ENCODE measurements at regions of chr7 and their contacts with region 1.

Region 1: DNA sequence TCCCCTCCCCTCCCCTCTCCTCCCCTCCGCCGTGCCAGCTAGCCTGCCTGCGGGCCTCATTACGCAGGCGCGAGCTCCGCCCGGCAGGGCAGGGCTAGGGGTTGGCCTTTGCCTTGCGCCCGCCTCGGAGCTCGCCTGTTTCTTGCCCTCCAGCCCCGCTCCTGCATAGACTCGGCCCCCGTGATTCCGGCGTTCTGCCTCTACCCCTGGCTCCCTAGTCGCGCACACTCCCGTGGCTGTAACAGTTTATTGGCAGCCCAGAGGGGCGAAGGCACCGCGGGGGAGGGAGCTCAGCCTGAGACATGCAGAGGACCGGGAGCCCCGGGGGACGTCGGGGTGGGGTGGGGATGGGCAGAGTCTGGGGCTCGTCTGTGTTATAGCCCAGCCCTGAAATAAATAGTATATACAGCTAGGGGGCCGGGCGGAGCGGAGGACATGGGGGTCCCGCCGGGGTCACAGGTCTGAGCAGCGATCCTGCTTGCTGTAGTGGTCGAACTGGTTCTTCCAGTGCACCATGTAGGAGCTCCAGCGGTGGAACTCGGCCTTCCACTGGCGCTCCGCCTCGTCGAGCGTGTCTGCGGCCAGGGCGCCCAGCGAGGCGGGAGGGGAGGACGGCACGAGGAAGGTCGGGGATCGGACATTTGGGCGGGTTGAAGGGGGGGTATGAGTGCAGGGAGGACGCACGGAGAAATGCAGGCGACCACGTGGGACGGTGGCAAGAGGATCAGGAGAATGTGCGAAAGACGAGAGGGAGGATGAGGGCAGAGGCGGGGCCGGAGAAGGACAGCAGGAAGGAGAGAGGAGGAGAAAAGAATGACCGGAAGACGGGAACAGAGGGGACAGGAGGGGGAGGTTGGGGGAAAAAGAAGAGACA is 483 bp upstream of the UFSP1 start:
- DNase-seq: peak; percentile 94 to 96
- H3K4me3 ChIP-seq: peak overlapping the region; percentile 67
- H3K4me3 Mint-ChIP-seq: peak overlapping the region; percentile 88
- H3K27ac Mint-ChIP-seq: peak overlapping the region; percentile 87
- H3K4me1 ChIP-seq: peaks cover 29% of the 10 kb centered on the region
- H3K4me1 Mint-ChIP-seq: peaks cover 50% of the 10 kb centered on the region
- H3K27me3 ChIP-seq: no peaks in the 10 kb centered on the region
- H3K27me3 Mint-ChIP-seq: no peaks in the 10 kb centered on the region
- CTCF ChIP-seq: no peak

Region 2: GRCh38 chr7:100781255-100781654 is 108.7 kb before region 1 on chr7:
- CTCF ChIA-PET with region 1: no interaction called
- POLR2A ChIA-PET with region 1: no interaction called
- intact Hi-C with region 1: no loop called
- DNase-seq: no peak
- H3K4me3 ChIP-seq: no peak overlapping the region
- H3K4me3 Mint-ChIP-seq: no peak overlapping the region
- H3K27ac Mint-ChIP-seq: no peak overlapping the region
- H3K4me1 ChIP-seq: no peaks in the 10 kb centered on the region
- H3K4me1 Mint-ChIP-seq: no peaks in the 10 kb centered on the region
- H3K27me3 ChIP-seq: no peaks in the 10 kb centered on the region
- H3K27me3 Mint-ChIP-seq: no peaks in the 10 kb centered on the region
- CTCF ChIP-seq: no peak

Region 3: DNA sequence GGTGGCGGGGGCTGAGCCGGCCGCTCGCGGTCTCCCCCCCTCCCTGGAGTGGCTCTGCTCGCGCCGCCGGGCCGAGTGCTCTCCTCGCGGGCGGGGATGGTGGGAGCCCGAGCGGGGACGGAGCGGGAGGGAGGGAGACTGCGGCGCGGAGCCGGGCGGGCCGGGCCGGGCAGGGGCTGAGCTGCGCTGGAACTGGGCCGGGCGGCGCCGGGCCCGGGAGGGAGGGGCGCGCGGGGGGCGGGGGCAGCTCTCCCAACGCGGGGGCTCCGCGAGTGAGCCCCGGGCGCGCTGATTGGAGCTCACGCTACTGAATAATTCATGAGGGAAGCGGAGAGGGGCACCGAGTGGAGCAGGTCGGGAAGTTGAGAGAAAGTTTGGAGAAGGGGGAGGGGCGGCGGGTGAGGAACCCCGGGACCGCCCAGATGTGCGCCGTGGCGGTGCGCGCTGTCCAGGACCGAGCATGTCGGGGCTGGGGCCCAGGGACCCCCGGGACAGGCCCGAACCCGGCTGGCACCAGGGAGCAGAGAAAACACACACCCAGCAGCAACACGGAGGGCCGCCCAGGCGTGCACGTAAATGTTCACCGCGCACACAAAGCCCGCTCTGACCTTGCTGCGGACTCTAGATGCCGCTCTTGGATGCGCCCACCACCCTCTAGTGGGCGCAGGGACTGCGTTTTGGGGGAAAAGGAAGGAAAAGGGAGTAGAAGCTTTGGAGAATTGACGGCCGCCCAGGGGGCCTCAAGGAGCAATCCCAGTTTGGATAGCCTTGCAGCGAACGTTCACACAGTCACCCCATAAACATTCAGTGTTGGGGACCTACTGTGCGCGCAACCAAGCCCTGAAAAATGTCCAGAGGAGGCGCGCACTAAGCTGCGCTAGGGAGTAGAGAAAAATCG is 62.4 kb before region 1 on chr7 and contains the start of gene EPHB4:
- CTCF ChIA-PET with region 1: interaction called, 3 read pairs
- POLR2A ChIA-PET with region 1: interaction called, 11 read pairs
- intact Hi-C with region 1: no loop called
- DNase-seq: peak; percentile 93 to 95
- H3K4me3 ChIP-seq: peak within 1 kb of the TSS; percentile 71
- H3K4me3 Mint-ChIP-seq: peak within 1 kb of the TSS; percentile 89
- H3K27ac Mint-ChIP-seq: peak within 1 kb of the TSS; percentile 88
- H3K4me1 ChIP-seq: peaks cover 29% of the 10 kb centered on the region
- H3K4me1 Mint-ChIP-seq: peaks cover 27% of the 10 kb centered on the region
- H3K27me3 ChIP-seq: no peaks in the 10 kb centered on the region
- H3K27me3 Mint-ChIP-seq: no peaks in the 10 kb centered on the region
- CTCF ChIP-seq: peak; percentile 44 to 92
- total RNA-seq, gene EPHB4: 112 and 117 TPM in 2 replicates

Region 4: DNA sequence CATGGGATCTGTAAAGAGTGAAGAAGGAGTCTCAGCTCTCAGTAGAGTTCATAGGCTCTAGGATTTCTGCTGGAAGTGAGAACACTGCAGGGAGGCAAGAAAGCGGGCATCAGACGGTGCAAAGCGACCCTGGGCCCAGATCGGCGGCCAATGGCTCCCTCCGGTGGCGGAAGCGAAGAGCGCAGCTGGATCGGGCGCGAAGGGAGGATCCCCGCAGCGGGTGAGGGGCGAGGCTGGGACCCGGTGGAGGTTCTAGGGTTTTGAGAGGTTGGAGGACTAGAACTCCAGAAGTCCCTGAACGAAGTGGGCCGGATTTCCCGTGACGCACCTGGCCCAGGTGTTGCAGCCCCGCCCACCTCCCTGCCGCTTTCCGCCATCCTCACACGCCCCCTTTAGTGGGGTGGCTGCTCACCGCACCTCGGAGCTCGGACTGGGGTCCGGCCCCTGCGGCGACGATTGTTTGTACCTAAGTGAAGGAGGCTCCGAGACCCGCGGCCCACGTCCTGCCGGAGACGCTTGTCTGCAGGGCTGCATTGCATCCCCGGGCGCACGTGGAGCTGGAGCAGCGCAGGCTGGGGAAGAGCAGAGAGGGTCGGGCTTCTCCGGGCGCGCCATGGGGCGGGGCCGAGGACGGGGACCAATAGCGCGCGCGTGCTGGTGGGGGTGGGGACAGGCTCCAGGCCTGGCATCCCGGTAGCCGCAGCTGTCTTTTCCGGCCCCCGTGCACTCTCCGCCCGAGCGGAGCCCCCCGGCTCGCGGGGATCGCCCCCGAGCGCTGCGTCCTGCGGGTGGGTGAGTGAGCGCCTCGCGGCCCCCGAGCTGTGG is 37.7 kb before region 1 on chr7 and contains the start of gene SLC12A9:
- CTCF ChIA-PET with region 1: interaction called, 7 read pairs
- POLR2A ChIA-PET with region 1: interaction called, 5 read pairs
- intact Hi-C with region 1: loop called (anchors 1 kb)
- DNase-seq: peak; percentile 93 to 95
- H3K4me3 ChIP-seq: peak within 1 kb of the TSS; percentile 74
- H3K4me3 Mint-ChIP-seq: peak within 1 kb of the TSS; percentile 79
- H3K27ac Mint-ChIP-seq: peak within 1 kb of the TSS; percentile 66
- H3K4me1 ChIP-seq: peaks cover 9% of the 10 kb centered on the region
- H3K4me1 Mint-ChIP-seq: peaks cover 15% of the 10 kb centered on the region
- H3K27me3 ChIP-seq: no peaks in the 10 kb centered on the region
- H3K27me3 Mint-ChIP-seq: no peaks in the 10 kb centered on the region
- CTCF ChIP-seq: peak; percentile 89 to 97
- total RNA-seq, gene SLC12A9: 59.0 and 60.7 TPM in 2 replicates

Region 5: GRCh38 chr7:100865971-100866728 is 23.8 kb before region 1 on chr7:
- CTCF ChIA-PET with region 1: no interaction called
- POLR2A ChIA-PET with region 1: no interaction called
- intact Hi-C with region 1: no loop called
- DNase-seq: no peak
- H3K4me3 ChIP-seq: no peak overlapping the region
- H3K4me3 Mint-ChIP-seq: peak overlapping the region; percentile 75
- H3K27ac Mint-ChIP-seq: peak overlapping the region; percentile 88
- H3K4me1 ChIP-seq: peaks cover 17% of the 10 kb centered on the region
- H3K4me1 Mint-ChIP-seq: peaks cover 7% of the 10 kb centered on the region
- H3K27me3 ChIP-seq: no peaks in the 10 kb centered on the region
- H3K27me3 Mint-ChIP-seq: no peaks in the 10 kb centered on the region
- CTCF ChIP-seq: no peak

Region 6: DNA sequence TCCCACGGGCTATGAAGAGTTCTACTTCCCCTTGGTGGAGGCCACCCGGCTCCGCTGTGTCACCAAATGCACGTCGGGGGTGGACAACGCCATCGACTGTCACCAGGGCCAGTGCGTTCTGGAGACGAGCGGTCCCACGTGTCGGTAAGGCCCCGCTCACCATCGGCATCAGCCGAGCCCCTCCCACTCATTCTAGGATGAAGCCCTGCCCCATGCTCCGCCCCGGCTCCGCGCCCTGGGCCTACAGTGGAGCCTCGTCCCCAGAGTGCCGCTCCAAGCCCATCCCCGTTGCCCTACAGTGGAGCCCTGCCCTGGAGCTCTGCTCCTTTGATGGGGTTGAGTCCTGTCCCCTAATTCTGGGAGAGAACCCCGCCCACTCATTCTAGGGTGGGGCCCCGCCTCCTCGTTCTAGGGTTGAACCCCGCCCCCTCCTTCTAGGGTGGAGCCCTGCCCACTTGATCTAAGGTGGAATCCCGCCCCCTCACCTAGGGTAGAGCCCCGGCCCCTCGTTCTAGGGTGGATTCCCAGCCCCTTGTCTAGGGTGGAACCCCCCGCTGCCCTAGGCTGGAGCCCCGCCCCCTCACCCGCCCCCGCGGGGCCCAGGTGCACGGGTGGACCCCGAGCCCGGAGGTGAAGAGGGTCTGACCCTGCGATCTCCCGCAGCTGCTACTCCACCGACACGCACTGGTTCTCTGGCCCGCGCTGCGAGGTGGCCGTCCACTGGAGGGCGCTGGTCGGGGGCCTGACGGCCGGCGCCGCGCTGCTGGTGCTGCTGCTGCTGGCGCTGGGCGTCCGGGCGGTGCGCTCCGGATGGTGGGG is 75.9 kb after region 1 on chr7:
- CTCF ChIA-PET with region 1: interaction called, 10 read pairs
- POLR2A ChIA-PET with region 1: interaction called, 4 read pairs
- intact Hi-C with region 1: loop called (anchors 1 kb)
- DNase-seq: peak; percentile 94 to 99
- H3K4me3 ChIP-seq: peak overlapping the region; percentile 57
- H3K4me3 Mint-ChIP-seq: peak overlapping the region; percentile 78
- H3K27ac Mint-ChIP-seq: peak overlapping the region; percentile 60
- H3K4me1 ChIP-seq: peaks cover 13% of the 10 kb centered on the region
- H3K4me1 Mint-ChIP-seq: peaks cover 17% of the 10 kb centered on the region
- H3K27me3 ChIP-seq: no peaks in the 10 kb centered on the region
- H3K27me3 Mint-ChIP-seq: peaks cover 9% of the 10 kb centered on the region
- CTCF ChIP-seq: peak; percentile 96 to 98

Region 7: DNA sequence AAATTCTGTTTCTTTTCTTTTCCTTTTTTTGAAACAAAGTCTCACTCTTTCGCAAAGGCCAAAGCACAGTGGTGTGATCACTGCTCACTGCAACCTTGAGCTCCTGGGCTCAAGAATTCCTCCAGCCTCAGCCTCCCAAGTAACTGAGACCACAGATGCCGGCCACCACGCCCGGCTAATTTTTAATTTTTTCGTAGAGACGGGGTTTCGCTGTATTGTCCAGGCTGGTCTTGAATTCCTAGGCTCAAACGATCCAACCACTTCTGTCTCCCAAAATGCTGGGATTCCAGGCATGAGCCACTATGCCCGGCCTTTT is 169.6 kb after region 1 on chr7:
- CTCF ChIA-PET with region 1: interaction called, 3 read pairs
- POLR2A ChIA-PET with region 1: interaction called, 14 read pairs
- intact Hi-C with region 1: no loop called
- DNase-seq: no peak
- H3K4me3 ChIP-seq: no peak overlapping the region
- H3K4me3 Mint-ChIP-seq: no peak overlapping the region
- H3K27ac Mint-ChIP-seq: no peak overlapping the region
- H3K4me1 ChIP-seq: no peaks in the 10 kb centered on the region
- H3K4me1 Mint-ChIP-seq: no peaks in the 10 kb centered on the region
- H3K27me3 ChIP-seq: no peaks in the 10 kb centered on the region; the same call in 1 of the 2 replicates
- H3K27me3 Mint-ChIP-seq: peaks cover 24% of the 10 kb centered on the region
- CTCF ChIP-seq: no peak

Region 8: GRCh38 chr7:101085162-101085987 is 195.4 kb after region 1 on chr7 and contains the start of gene TRIM56:
- CTCF ChIA-PET with region 1: no interaction called
- POLR2A ChIA-PET with region 1: interaction called, 11 read pairs
- intact Hi-C with region 1: no loop called
- DNase-seq: peak; percentile 95 to 96
- H3K4me3 ChIP-seq: peak within 1 kb of the TSS; percentile 82
- H3K4me3 Mint-ChIP-seq: peak within 1 kb of the TSS; percentile 85
- H3K27ac Mint-ChIP-seq: peak within 1 kb of the TSS; percentile 83
- H3K4me1 ChIP-seq: peaks cover 12% of the 10 kb centered on the region
- H3K4me1 Mint-ChIP-seq: peaks cover 16% of the 10 kb centered on the region
- H3K27me3 ChIP-seq: no peaks in the 10 kb centered on the region
- H3K27me3 Mint-ChIP-seq: no peaks in the 10 kb centered on the region
- CTCF ChIP-seq: no peak
- total RNA-seq, gene TRIM56: 30.3 and 33.4 TPM in 2 replicates

Region 9: DNA sequence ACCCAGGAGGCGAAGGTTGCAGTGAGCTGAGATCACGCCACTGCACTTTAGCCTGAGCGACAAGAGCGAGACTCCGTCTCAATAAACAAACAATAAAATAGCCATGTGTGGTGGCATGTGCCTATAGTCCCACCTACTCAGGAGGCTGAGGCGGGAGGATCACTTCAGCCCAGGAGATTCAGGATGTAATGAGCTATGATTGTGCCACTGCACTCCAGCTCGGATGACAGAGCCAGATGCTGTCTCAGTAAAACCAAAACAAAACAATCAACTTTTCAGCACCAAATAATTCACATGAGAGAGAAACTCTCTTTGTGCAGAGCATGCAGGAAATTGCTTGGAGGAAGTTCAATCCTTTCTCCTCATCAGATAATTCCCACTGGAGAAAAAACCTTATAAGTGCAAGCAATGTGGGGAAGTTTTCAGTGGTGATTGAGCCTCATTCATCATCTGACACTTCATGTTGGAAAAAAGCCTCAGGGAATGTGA is 368.3 kb after region 1 on chr7:
- CTCF ChIA-PET with region 1: no interaction called
- POLR2A ChIA-PET with region 1: no interaction called
- intact Hi-C with region 1: no loop called
- DNase-seq: no peak
- H3K4me3 ChIP-seq: no peak overlapping the region
- H3K4me3 Mint-ChIP-seq: no peak overlapping the region
- H3K27ac Mint-ChIP-seq: no peak overlapping the region
- H3K4me1 ChIP-seq: no peaks in the 10 kb centered on the region
- H3K4me1 Mint-ChIP-seq: no peaks in the 10 kb centered on the region
- H3K27me3 ChIP-seq: no peaks in the 10 kb centered on the region
- H3K27me3 Mint-ChIP-seq: no peaks in the 10 kb centered on the region
- CTCF ChIP-seq: no peak

Measured in Caco-2 (cell line).